Activated B cell treated with CpG ODN at 0.5 μM for 24 hours (primary cell): ENCODE measurements at regions of chr2 and their contacts with region 1.

Region 1: DNA sequence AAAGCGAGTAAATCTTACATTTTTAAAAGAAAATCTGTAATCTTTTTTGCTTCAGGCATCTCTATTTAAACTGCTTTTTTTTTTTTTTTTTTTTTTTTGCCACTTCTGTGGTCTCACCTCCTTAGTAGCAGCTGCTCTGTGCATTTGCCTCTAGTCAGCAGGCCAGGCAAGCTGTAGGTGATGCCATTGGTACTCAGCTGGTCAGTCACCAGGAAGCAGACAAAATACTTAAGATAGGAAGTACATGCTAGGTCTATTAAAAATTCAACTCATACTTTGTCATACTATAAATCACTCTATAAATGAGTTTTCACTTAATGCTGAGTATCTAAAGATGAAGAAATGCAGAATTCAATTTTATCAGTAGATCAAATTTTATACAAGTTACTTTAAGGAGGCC is 83.7 kb downstream of the KYNU start:
- DNase-seq: no peak
- ATAC-seq: no peak
- H3K4me3 Mint-ChIP-seq: no peak overlapping the region
- H3K27ac Mint-ChIP-seq: no peak overlapping the region
- H3K4me1 Mint-ChIP-seq: no peaks in the 10 kb centered on the region
- H3K27me3 Mint-ChIP-seq: no peaks in the 10 kb centered on the region
- CTCF ChIP-seq: no peak

Region 2: GRCh38 chr2:142920586-142920985 is 40.6 kb before region 1 on chr2:
- CTCF ChIA-PET with region 1: no interaction called
- POLR2A ChIA-PET with region 1: no interaction called
- intact Hi-C with region 1: loop called (anchors 5 kb)
- DNase-seq: no peak
- ATAC-seq: no peak
- H3K4me3 Mint-ChIP-seq: no peak overlapping the region
- H3K27ac Mint-ChIP-seq: no peak overlapping the region
- H3K4me1 Mint-ChIP-seq: peaks cover 7% of the 10 kb centered on the region
- H3K27me3 Mint-ChIP-seq: no peaks in the 10 kb centered on the region
- CTCF ChIP-seq: no peak

Region 3: DNA sequence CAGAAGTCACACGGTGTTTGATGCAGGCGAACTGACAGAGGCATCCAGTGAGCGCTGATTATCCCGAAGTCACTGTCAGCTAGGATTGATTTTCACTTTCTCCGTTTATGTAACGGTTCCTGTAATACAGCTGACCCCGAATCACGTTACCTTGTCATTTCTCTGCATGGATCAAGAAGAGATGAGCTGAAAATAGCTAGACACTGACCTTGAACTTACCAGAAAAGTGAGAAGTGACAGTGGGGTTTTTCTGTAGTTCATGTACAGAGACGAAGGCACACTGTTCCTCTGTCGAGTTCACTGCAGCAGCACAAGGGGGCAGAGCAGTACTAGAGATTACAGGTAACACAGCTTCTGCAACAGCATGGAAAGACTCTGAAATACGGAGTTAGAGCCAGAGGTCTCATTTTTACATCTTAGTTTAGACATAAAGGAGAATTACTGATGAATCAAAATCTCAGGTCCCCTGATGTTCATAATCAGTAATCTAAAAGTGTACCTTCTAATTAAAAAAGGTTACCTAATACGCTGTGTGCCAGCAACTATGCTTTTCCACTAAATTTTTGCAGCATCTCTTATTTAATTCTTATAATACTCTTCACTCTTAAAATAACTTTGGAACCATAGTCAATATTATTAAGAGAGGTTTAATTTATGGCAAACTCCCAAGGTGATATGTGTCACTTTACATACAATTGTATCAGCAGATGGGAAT is 201.1 kb after region 1 on chr2:
- CTCF ChIA-PET with region 1: no interaction called
- POLR2A ChIA-PET with region 1: no interaction called
- intact Hi-C with region 1: no loop called
- DNase-seq: no peak
- ATAC-seq: peak; percentile 95
- H3K4me3 Mint-ChIP-seq: no peak overlapping the region
- H3K27ac Mint-ChIP-seq: peak overlapping the region; percentile 37
- H3K4me1 Mint-ChIP-seq: peaks cover 76% of the 10 kb centered on the region
- H3K27me3 Mint-ChIP-seq: no peaks in the 10 kb centered on the region
- CTCF ChIP-seq: no peak